Activated CD8-positive, alpha-beta memory T cell treated with anti-CD3 and anti-CD28 coated beads, Interleukin-2, amount 10 ng/mL, durations not matched to agents 7 days and 5 days (primary cell): ENCODE measurements at regions of chr6 and their contacts with region 1.

Region 1: DNA sequence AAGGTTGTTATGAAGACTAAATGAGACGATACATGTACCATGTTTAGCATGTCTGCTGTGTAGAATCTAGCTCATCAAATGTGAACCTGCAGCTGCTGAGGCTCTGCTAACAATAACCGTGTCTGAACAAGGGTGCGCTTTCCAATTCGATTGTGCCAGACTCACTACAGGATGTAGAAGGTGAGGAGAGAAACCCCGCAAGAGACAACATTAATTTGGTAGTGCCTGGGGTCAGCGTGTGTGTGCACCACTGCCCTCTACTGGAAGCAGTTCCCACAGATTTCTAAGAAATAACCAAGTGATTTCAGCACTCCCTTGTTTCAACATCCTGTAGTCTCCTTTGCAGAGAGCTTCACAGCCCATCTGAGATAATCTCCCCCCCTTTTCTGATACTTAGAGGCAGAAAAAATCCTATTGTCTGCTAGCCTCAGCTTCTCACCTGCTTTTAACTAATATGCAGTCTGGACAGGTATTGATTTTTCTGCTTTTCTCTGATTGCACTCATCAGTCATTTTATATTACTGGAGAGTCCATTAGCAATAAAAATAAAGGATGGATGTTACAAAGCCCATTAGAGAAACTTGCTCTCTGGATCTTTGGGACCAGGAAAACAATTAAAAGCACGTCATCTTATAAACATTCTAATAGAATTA is 96.7 kb upstream of the BACH2 start:
- DNase-seq: peak; percentile 88
- ATAC-seq: peak; percentile 68
- H3K4me3 Mint-ChIP-seq: no peak overlapping the region
- H3K27ac Mint-ChIP-seq: peak overlapping the region; percentile 30
- H3K4me1 Mint-ChIP-seq: peaks cover 58% of the 10 kb centered on the region
- H3K27me3 Mint-ChIP-seq: peaks cover 4% of the 10 kb centered on the region

Region 2: DNA sequence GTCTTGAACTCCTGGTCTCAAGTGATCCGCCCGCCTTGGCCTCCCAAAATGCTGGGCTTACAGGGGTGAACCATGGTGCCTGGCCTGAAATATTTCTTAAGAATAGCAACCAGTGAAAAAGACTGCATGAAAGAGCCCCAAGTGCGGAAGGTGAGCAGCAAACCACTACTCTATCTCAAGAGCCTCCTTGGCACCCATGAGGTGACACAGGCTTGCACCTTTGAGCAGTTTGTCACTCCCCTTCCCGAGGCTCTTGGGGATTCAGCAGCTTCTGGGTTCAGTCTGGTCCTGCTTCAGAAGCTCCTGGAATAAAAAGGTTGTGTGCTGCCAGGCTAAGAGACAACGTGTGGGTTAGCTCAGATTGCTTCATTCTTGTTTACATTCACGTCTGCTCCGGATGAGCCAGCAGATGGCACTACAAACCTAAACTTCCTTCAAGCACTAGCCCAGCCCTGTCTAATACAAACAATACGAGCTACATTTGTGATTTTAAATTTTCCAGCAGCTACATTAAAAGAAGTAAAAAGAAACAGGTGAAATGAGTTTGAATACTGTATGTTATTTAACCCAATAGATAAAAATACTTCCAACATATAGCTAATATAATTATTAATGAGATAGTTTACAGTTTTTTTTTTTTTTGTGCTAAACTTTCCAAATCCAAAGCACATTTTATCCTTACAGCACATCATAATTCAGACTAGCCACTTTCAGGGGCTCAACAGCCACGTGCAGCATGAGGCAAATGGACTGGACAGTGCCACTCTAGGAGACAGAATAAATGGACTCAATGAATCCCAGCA is 452.9 kb before region 1 on chr6:
- CTCF ChIA-PET with region 1: interaction called, 21 read pairs
- DNase-seq: peak; percentile 83
- ATAC-seq: peak; percentile 94
- H3K4me3 Mint-ChIP-seq: no peak overlapping the region
- H3K27ac Mint-ChIP-seq: no peak overlapping the region
- H3K4me1 Mint-ChIP-seq: peaks cover 33% of the 10 kb centered on the region
- H3K27me3 Mint-ChIP-seq: no peaks in the 10 kb centered on the region

Region 3: DNA sequence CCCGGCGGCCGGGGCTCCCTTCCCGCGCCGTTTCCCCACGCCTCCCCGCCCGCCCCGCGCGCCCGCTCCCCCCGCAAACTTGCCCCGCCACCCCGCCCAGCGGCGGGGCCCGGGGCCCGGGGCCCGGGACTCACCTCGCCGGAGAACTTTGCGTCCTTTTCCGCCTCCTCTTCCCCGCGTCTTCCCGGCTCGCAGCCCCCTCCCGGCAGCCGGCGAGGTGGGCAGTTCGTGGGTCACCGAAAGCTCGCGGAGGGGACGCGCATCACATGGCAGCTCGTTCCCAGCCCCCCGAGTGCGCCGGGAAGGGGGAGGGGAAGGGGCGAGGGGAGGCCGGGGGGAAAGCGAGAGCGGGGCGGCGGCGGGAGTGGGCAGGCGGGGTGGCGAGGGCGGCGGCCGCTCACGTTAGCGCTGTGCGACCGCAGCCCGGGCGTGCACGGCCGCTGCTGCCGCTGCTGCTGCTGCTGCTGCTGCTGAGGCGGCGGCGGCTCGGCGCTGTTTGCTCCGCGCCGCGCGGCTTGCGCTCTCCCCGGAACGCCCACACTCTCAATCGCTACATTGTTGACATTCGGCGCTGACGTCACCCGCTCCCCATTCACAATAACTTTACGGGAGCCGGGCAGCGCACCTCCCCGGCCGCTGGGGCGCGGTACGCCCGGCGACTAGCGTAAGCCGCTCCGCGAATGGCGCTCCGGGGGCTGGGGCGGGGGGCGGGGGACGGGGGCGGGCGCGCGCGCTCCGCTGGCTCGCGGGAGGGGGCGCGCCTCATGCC is 96.8 kb before region 1 on chr6 and contains the start of gene BACH2:
- CTCF ChIA-PET with region 1: interaction called, 46 read pairs
- DNase-seq: peak; percentile 95
- ATAC-seq: peak; percentile 81
- H3K4me3 Mint-ChIP-seq: peak within 1 kb of the TSS; percentile 84
- H3K27ac Mint-ChIP-seq: peak within 1 kb of the TSS; percentile 85
- H3K4me1 Mint-ChIP-seq: peaks cover 24% of the 10 kb centered on the region
- H3K27me3 Mint-ChIP-seq: peaks cover 52% of the 10 kb centered on the region
- total RNA-seq, gene BACH2: 21.5 to 22.6 TPM

Region 4: GRCh38 chr6:90375681-90376439 is 17.5 kb before region 1 on chr6:
- CTCF ChIA-PET with region 1: interaction called, 15 read pairs
- DNase-seq: no peak
- ATAC-seq: no peak
- H3K4me3 Mint-ChIP-seq: no peak overlapping the region
- H3K27ac Mint-ChIP-seq: no peak overlapping the region
- H3K4me1 Mint-ChIP-seq: peaks cover 4% of the 10 kb centered on the region
- H3K27me3 Mint-ChIP-seq: peaks cover 3% of the 10 kb centered on the region

Region 5: DNA sequence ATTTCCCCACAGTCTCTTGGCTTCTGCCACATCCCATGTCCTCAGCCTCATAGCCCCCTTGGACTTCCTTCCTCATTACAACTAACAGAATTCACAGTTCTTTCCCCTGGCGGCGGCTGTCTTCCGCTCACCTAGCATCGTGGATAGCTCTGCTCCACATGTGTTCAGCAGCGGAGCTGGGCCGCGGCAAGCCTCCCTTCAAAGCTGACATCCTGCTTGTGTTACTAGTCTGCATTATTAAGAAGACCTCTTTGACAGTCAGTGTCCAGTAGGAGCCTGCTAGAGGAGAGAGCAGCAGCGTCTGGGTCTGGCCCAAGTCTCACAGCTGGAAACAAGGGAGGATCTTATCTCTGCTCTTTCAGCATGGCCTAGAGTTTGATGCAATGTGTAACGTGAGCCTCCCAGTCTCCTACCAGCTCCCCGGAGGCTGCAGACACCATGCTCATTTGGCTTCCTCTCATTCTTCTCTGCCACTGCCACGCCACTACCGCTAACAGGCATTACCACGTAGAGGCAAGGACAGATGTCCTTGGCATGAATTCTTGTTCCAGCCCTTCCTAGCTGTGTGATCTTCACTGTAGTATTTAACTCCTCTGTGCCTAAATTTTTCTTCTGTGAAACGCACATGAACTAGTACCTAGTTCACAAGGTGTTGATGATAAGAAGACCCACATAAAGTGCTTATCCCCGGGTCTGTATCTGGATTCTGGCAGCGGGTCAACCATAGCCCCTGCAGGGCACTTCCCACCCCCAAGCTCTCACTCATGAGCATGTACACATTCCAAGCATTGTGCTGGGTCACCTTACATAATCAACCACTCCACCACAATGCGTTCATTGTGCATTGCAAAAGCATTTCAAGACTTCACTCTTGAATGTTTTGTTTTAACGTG is 10.4 kb after region 1 on chr6:
- CTCF ChIA-PET with region 1: interaction called, 15 read pairs
- DNase-seq: no peak
- ATAC-seq: no peak
- H3K4me3 Mint-ChIP-seq: no peak overlapping the region
- H3K27ac Mint-ChIP-seq: peak overlapping the region; percentile 77
- H3K4me1 Mint-ChIP-seq: peaks cover 77% of the 10 kb centered on the region
- H3K27me3 Mint-ChIP-seq: no peaks in the 10 kb centered on the region

Region 6: DNA sequence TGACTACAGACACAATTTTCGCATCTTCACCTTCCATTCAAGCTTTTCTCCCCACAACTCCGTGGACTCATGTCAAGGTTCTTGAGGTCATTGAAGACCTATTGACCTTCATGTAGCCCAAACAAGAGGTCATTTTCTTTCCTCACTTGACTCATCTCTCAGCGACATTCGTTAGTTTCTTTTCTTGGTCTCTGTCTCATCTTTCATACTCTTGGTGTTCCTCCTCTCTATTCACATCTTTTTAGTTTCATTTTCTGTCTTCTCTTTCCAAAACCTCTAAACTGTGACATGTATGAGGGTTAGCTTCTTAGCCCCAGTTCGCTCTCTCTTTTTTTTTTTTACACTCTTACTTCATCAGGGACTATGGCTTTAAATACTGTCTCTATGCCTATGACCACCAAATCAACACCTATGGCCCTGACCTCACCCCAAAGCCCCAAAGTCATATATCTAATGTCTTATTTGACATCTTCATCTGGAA is 31.8 kb after region 1 on chr6:
- CTCF ChIA-PET with region 1: interaction called, 19 read pairs
- DNase-seq: peak; percentile 75
- ATAC-seq: peak; percentile 95
- H3K4me3 Mint-ChIP-seq: peak overlapping the region; percentile 73
- H3K27ac Mint-ChIP-seq: peak overlapping the region; percentile 99
- H3K4me1 Mint-ChIP-seq: peaks cover 27% of the 10 kb centered on the region
- H3K27me3 Mint-ChIP-seq: no peaks in the 10 kb centered on the region

Region 7: DNA sequence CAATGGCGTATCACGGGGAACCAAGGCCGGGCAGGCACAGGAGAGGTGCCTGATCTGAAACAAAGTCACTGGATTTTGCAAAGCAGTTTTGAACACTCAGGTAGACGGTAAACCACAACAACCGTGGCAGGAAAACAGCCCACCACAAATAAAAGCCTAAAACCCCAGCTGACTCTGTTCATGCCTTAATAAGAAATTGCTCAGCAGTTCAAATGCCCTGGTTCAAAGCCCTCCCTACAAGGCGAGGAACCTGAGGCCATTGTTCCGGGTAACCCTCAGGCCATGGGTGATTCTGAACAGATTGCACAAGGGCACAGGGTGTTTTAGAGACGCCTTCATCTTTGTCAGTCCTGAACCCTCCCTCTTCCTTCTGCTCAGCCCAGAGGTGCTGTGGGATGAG is 79.4 kb after region 1 on chr6:
- CTCF ChIA-PET with region 1: interaction called, 94 read pairs
- DNase-seq: peak; percentile 86
- ATAC-seq: peak; percentile 42
- H3K4me3 Mint-ChIP-seq: peak overlapping the region; percentile 70
- H3K27ac Mint-ChIP-seq: peak overlapping the region; percentile 88
- H3K4me1 Mint-ChIP-seq: peaks cover 90% of the 10 kb centered on the region
- H3K27me3 Mint-ChIP-seq: peaks cover 6% of the 10 kb centered on the region